Gastrocnemius medialis (tissue), 4 donors: ENCODE measurements at regions of chr16 and their contacts with region 1.

Region 1: GRCh38 chr16:61544165-61544564 is 492.1 kb downstream of the CDH8 start:
- DNase-seq: no peak
- ATAC-seq: no peak
- H3K4me3 ChIP-seq: no peak overlapping the region
- H3K27ac ChIP-seq: no peak overlapping the region
- H3K4me1 ChIP-seq: no peaks in the 10 kb centered on the region
- H3K27me3 ChIP-seq: no peaks in the 10 kb centered on the region
- CTCF ChIP-seq: no peak
- POLR2A ChIP-seq: no peak

Region 2: GRCh38 chr16:61617384-61617783 is 73.2 kb after region 1 on chr16:
- in situ Hi-C with region 1: no loop called
- intact Hi-C with region 1: loop called (anchors 2 kb)
- DNase-seq: no peak
- ATAC-seq: no peak
- H3K4me3 ChIP-seq: no peak overlapping the region
- H3K27ac ChIP-seq: no peak overlapping the region
- H3K4me1 ChIP-seq: no peaks in the 10 kb centered on the region
- H3K27me3 ChIP-seq: no peaks in the 10 kb centered on the region
- CTCF ChIP-seq: no peak
- POLR2A ChIP-seq: no peak

Region 3: GRCh38 chr16:61936522-61936921 is 392.4 kb after region 1 on chr16:
- in situ Hi-C with region 1: no loop called
- intact Hi-C with region 1: no loop called
- DNase-seq: no peak
- ATAC-seq: no peak
- H3K4me3 ChIP-seq: no peak overlapping the region
- H3K27ac ChIP-seq: no peak overlapping the region
- H3K4me1 ChIP-seq: no peaks in the 10 kb centered on the region
- H3K27me3 ChIP-seq: no peaks in the 10 kb centered on the region
- CTCF ChIP-seq: no peak
- POLR2A ChIP-seq: no peak